ENCODE measurements at regions of chr2 and their contacts with region 1.

Region 1: GRCh38 chr2:189899101-189899500 is 114.9 kb downstream of the PMS1 start:
- DNase-seq: no peak
- H3K4me3 ChIP-seq: no peak overlapping the region
- H3K27ac ChIP-seq: no peak overlapping the region
- H3K4me1 ChIP-seq: no peaks in the 10 kb centered on the region
- CTCF ChIP-seq: no peak

Region 2: GRCh38 chr2:189913821-189914220 is 14.7 kb after region 1 on chr2:
- CTCF ChIA-PET with region 1: no interaction called
- POLR2A ChIA-PET with region 1: interaction called, 14 read pairs
- intact Hi-C with region 1: no loop called
- DNase-seq: no peak
- H3K4me3 ChIP-seq: no peak overlapping the region
- H3K27ac ChIP-seq: no peak overlapping the region
- H3K4me1 ChIP-seq: no peaks in the 10 kb centered on the region
- CTCF ChIP-seq: no peak

Region 3: GRCh38 chr2:190791347-190791975 is 892.4 kb after region 1 on chr2:
- CTCF ChIA-PET with region 1: no interaction called
- POLR2A ChIA-PET with region 1: no interaction called
- intact Hi-C with region 1: no loop called
- DNase-seq: no peak
- H3K4me3 ChIP-seq: no peak overlapping the region
- H3K27ac ChIP-seq: no peak overlapping the region
- H3K4me1 ChIP-seq: no peaks in the 10 kb centered on the region
- CTCF ChIP-seq: no peak

Measured in OCI-LY7 (cell line).